PC-3 (cell line): ENCODE measurements at regions of chr15 and their contacts with region 1.

Region 1: DNA sequence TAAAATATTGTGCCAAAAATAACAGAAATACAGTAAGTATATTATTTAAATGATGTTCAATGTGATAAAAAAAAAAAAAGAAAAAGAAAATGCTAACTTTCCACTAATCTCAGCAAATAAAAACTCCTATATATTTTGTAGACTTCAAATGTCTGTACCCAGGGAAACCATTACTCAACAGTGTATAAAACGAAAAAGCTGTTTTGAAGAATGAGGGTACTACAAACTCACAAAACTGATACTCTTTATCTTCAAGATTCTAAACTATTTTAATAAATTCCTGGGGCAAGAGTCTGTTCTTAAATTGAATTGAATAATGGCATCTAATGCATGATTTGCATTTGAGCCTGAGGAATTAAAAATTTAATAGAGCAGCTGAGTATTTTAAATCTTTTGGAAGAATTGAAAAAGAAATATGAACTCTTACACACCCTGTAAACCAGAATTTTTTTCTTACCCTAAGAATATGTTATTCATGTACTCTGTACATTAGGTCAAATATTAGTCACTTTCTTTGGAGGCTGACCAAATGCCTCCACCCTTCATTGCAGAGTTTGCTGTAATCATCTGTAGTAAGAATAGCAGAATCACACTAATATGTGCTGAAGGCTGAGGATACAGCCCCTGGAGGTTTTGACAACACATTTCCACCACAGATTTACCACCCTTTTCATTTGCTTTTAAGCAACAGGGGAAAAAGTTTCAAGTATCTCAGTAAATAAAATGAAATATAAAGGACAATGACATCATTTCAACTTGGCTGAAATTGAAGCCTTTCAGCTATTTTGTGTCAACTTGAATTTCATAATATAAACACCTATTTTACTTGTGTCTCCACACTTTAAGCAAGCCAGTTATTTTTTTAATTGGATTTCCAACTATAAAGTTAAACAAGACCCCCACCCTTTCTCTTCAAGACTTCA is 79.7 kb downstream of the FBN1 start:
- DNase-seq: peak; percentile 93
- ATAC-seq: peak; percentile 94
- H3K4me3 ChIP-seq: no peak overlapping the region
- H3K27ac ChIP-seq: peak overlapping the region; percentile 56
- H3K4me1 ChIP-seq: peaks cover 24% of the 10 kb centered on the region
- H3K27me3 ChIP-seq: no peaks in the 10 kb centered on the region
- CTCF ChIP-seq: no peak

Region 2: GRCh38 chr15:48472753-48473152 is 93.1 kb before region 1 on chr15:
- CTCF ChIA-PET with region 1: no interaction called
- POLR2A ChIA-PET with region 1: no interaction called
- intact Hi-C with region 1: loop called (anchors 10 kb)
- DNase-seq: peak; percentile 53
- ATAC-seq: peak; percentile 82
- H3K4me3 ChIP-seq: no peak overlapping the region
- H3K27ac ChIP-seq: peak overlapping the region; percentile 71
- H3K4me1 ChIP-seq: peaks cover 14% of the 10 kb centered on the region
- H3K27me3 ChIP-seq: no peaks in the 10 kb centered on the region
- CTCF ChIP-seq: no peak

Region 3: DNA sequence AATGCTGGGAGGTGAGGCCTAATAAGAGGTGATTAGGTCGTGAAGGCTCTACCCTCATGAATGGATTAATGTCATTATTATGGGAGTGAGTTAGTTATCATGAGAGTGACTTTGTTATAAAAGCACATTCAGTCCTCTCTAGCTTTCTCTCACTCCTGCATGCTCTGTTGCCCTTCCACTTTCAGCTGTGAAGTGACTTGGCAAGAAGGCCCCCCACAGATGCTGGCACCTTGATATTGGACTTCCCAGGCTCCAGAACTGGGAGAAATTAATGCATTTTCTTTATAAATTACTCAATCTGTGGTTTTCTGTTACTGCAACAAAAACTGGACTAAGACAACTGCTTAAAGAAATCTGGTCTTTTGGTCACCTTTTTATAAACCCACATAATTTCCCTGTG is 64.6 kb before region 1 on chr15:
- CTCF ChIA-PET with region 1: no interaction called
- POLR2A ChIA-PET with region 1: no interaction called
- intact Hi-C with region 1: no loop called
- DNase-seq: no peak
- ATAC-seq: no peak
- H3K4me3 ChIP-seq: no peak overlapping the region
- H3K27ac ChIP-seq: no peak overlapping the region
- H3K4me1 ChIP-seq: no peaks in the 10 kb centered on the region
- H3K27me3 ChIP-seq: no peaks in the 10 kb centered on the region
- CTCF ChIP-seq: no peak

Region 4: DNA sequence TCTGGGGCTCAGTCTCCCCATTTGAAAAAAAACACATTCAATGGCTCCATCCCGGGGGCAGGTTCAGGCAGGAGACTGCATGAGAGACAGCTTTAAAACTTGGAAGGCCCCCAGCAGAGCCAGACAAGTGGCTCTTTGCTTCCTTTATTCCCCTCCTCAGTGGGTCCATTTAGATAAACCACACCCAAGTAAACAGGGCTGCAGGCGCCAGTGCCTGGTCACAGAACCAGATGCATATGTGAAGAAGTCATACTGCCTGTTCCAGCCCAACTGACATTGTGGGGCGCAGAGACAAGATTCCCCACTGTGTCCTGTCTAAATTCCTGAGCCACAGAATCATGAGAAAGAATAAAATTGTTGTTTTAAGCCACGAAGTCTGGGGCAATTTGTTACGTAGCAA is 70.7 kb after region 1 on chr15:
- CTCF ChIA-PET with region 1: no interaction called
- POLR2A ChIA-PET with region 1: no interaction called
- intact Hi-C with region 1: loop called (anchors 5 kb)
- DNase-seq: no peak
- ATAC-seq: no peak
- H3K4me3 ChIP-seq: no peak overlapping the region
- H3K27ac ChIP-seq: no peak overlapping the region
- H3K4me1 ChIP-seq: no peaks in the 10 kb centered on the region
- H3K27me3 ChIP-seq: no peaks in the 10 kb centered on the region
- CTCF ChIP-seq: no peak